ENCODE measurements at regions of chr13 and their contacts with region 1.

Region 1: DNA sequence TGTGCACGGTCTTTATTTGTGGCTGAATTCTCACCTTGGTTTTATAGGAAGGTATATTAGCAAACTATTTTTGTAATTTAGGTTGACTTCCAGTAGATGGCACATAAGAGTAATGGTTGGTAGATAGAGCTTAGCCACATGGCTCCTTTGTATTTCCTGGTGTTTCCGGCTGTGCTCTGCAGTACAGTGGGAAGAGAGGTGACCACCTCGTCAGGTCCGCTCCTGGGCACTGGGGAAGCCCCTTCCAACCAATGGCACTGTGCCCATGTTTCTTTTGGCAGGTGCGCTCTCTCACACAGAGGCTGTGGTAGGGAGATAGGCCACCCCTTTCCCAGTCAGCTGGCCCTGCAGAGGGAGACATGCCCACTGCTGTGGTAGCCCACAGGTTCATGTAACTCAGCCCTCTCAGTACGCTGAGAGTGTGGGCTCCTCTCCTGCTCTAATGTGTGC is 74.3 kb upstream of the ATP12A start:
- DNase-seq: peak; percentile 26
- ATAC-seq: peak; percentile 90
- H3K4me3 Mint-ChIP-seq: no peak overlapping the region
- H3K27ac Mint-ChIP-seq: peak overlapping the region; percentile 65
- H3K4me1 Mint-ChIP-seq: peaks cover 32% of the 10 kb centered on the region
- H3K27me3 Mint-ChIP-seq: peaks cover 15% of the 10 kb centered on the region

Region 2: DNA sequence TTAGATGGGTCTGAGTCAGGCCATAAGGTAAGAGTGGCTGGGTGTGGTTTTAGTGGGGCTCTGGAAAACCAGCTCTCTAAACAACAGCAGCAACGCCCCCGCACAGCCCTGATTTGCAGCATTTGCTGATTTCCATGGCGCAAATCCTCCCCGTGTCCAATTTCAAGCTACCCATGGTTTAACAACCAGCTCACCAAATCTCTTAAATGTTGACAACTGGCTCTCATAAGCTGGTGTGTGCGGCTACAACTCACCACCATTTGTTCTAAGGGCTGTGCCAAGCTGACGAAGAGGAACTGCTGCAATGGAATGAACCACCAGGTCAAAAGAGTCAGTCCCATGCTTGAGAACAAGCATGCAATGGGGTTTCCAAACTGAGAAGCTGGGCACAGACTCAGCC is 116.2 kb before region 1 on chr13:
- CTCF ChIA-PET with region 1: no interaction called
- POLR2A ChIA-PET with region 1: no interaction called
- intact Hi-C with region 1: no loop called
- DNase-seq: no peak
- ATAC-seq: no peak
- H3K4me3 Mint-ChIP-seq: no peak overlapping the region
- H3K27ac Mint-ChIP-seq: no peak overlapping the region
- H3K4me1 Mint-ChIP-seq: no peaks in the 10 kb centered on the region
- H3K27me3 Mint-ChIP-seq: no peaks in the 10 kb centered on the region

Region 3: DNA sequence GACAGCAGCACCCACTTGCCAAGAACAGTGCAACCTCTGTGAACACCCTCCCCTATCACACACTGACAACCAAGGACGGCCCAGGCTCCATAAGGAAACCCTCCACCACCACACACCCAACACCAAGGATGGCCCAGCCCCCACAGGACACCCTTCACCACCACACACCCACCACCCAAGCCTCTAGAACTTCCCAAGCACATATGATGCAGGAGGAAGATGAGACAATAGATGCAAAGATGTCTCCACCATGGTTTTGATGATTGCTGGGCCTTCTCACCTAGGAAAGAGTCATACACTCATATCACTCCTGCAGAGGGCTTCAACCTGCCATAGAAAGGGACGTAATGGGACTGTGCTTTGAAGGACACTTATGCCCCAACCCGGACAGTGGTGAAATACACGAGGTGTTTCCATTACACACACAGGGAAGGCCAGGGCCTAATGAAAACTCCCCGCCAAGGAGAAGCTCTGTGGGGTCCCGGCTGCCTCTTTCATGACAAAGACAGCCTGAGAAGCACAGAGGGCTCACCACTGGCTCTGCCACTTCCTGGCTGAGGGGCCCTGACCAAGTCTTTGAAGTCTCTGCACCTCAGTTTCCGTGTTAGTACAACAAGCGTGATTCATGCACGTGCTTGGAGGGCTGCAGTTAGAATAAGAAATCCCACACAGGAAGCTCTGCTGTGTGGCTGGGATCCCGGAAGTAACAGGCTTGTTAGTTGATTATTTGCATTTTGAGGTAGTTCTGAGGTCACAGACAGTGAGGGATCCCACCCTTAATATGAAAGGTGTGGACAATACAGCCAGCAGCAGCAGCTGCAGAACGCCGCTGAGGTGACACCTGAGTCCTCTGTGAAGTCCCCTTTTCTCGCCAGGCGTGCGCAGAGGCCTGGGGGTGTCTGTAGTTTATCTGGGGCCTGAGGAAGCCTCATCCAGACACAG is 12.3 kb after region 1 on chr13:
- CTCF ChIA-PET with region 1: interaction called, 10 read pairs
- POLR2A ChIA-PET with region 1: no interaction called
- intact Hi-C with region 1: no loop called
- DNase-seq: peak; percentile 81
- ATAC-seq: peak; percentile 92
- H3K4me3 Mint-ChIP-seq: no peak overlapping the region
- H3K27ac Mint-ChIP-seq: peak overlapping the region; percentile 73
- H3K4me1 Mint-ChIP-seq: peaks cover 33% of the 10 kb centered on the region
- H3K27me3 Mint-ChIP-seq: no peaks in the 10 kb centered on the region

Region 4: GRCh38 chr13:24671386-24672107 is 65.6 kb after region 1 on chr13:
- CTCF ChIA-PET with region 1: interaction called, 31 read pairs
- POLR2A ChIA-PET with region 1: no interaction called
- intact Hi-C with region 1: loop called (anchors 1 kb)
- DNase-seq: no peak
- ATAC-seq: peak; percentile 47
- H3K4me3 Mint-ChIP-seq: no peak overlapping the region
- H3K27ac Mint-ChIP-seq: no peak overlapping the region
- H3K4me1 Mint-ChIP-seq: peaks cover 9% of the 10 kb centered on the region
- H3K27me3 Mint-ChIP-seq: peaks cover 8% of the 10 kb centered on the region

Measured in activated CD4-positive, alpha-beta T cell treated with anti-CD3 and anti-CD28 coated beads for 36 hours (primary cell).